ENCODE measurements at regions of chr3 and their contacts with region 1.

Region 1: DNA sequence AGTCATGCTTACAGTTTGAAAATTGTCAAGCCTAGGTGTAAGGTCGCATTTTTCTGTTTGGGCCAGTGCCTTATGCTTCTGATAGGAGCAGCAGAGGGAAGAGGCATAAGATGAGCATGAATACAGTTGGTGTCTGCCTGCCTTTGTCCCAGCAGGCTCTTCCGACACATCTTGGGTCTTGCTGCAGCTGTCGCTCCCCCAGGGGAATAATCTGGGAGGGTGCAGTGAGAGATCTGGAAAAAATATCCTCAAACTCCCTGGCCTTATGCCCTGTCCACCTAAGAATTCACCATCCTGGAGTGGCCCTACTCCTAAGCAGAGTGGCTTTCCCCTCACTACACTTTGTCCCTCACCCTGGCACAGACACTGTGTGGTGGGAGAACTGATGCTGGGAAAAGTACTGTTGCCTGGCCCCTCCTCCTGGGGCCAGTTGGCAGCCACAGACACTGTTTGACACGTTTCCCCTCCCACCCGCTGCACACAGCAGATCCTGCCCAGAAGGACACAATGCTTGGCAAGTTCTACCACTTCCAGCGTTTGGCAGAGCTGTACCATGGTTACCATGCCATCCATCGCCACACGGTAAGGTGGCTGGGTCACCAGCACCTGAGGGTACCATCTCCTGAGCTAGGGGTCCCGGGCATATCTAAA is 21.1 kb upstream of the RHO start:
- DNase-seq: no peak
- H3K4me3 ChIP-seq: no peak overlapping the region
- H3K27ac ChIP-seq: no peak overlapping the region
- H3K4me1 ChIP-seq: no peaks in the 10 kb centered on the region
- H3K27me3 ChIP-seq: no peaks in the 10 kb centered on the region
- CTCF ChIP-seq: no peak
- EP300 ChIP-seq: no peak
- POLR2A ChIP-seq: no peak
- RAD21 ChIP-seq: no peak

Region 2: DNA sequence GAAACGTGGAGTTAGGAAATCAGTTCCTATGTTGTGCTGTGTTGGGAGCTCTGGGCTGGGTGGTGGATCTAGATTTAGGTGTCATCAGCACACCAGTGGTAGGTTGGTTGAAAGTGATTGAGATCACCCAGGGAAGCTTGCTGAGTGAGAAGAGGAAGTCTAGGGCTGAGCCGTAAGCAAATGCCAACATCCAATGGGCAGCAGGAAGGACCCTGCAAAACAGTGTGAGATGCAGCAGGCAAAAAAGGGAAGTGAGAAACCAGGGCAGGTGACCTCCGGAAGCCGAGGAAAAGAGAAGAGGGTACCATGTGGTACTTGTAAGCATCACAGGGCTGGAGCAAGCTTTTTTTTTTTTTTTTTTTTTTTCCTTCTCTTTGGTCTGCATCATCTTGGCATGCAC is 273.8 kb before region 1 on chr3:
- CTCF ChIA-PET with region 1: no interaction called
- POLR2A ChIA-PET with region 1: no interaction called
- DNase-seq: no peak
- H3K4me3 ChIP-seq: no peak overlapping the region
- H3K27ac ChIP-seq: no peak overlapping the region
- H3K4me1 ChIP-seq: peaks cover 0 to 6% (median 6%) of the 10 kb centered on the region in 4 experiments; a peak in 6 of 7 replicates
- H3K27me3 ChIP-seq: no peaks in the 10 kb centered on the region; a peak in 1 of 7 replicates
- CTCF ChIP-seq: no peak
- EP300 ChIP-seq: no peak
- POLR2A ChIP-seq: no peak
- RAD21 ChIP-seq: no peak

Region 3: DNA sequence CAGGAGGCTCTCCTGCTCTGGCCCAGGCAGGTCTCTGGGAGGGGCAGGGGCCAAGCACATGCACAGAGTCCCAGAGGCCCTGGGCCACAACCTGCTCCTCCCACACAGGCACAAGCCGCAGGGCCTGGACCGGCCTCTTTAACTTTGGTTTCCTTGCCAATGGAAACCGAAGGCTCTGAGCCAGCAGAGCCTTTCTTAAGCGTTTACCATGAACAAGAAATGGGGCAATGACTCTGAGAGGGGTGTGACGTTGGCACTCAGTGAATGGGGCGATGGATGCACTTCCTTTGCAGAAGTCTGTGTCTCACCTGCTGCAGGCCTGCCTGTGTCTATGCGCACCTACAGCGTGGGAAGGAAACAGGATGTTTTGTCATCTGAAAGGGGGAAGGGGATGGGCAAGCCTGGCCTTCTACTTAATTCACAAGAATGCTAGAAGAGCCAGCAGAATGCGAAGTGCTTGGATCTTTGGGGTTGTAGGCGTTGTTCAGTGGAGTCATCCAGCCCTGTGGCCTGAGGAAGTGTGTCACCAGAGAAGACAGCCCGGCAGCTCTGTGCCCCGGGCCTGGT is 25.5 kb before region 1 on chr3:
- CTCF ChIA-PET with region 1: interaction called, 12 read pairs
- POLR2A ChIA-PET with region 1: interaction called, 5 read pairs
- DNase-seq: no peak
- H3K4me3 ChIP-seq: no peak overlapping the region
- H3K27ac ChIP-seq: no peak overlapping the region
- H3K4me1 ChIP-seq: peaks cover 2 to 12% (median 5%) of the 10 kb centered on the region in 4 experiments; a peak in 6 of 7 replicates
- H3K27me3 ChIP-seq: no peaks in the 10 kb centered on the region
- CTCF ChIP-seq: no peak
- EP300 ChIP-seq: no peak
- POLR2A ChIP-seq: no peak
- RAD21 ChIP-seq: no peak